Ovary (tissue), 10 donors: ENCODE measurements at regions of chr2 and their contacts with region 1.

Region 1: GRCh38 chr2:189580658-189581353 is at the start of gene SLC40A1:
- DNase-seq: peak; percentile 88 to 91 (median 88)
- H3K4me3 ChIP-seq: peak within 1 kb of the TSS; percentile 68
- H3K27ac ChIP-seq: peak within 1 kb of the TSS; percentile 90 to 92
- H3K4me1 ChIP-seq: peaks cover 10% of the 10 kb centered on the region
- H3K27me3 ChIP-seq: no peaks in the 10 kb centered on the region
- CTCF ChIP-seq: peak in 2 of 3 donors; percentile 26 to 40
- EP300 ChIP-seq: no peak
- POLR2A ChIP-seq: peak; percentile 97
- total RNA-seq, gene SLC40A1: 243 to 515 (median 365) TPM

Region 2: GRCh38 chr2:189439342-189439741 is 141.5 kb before region 1 on chr2:
- intact Hi-C with region 1: no loop called
- DNase-seq: no peak
- H3K4me3 ChIP-seq: no peak overlapping the region
- H3K27ac ChIP-seq: no peak overlapping the region
- H3K4me1 ChIP-seq: peaks cover 9% of the 10 kb centered on the region
- H3K27me3 ChIP-seq: no peaks in the 10 kb centered on the region
- CTCF ChIP-seq: no peak
- EP300 ChIP-seq: no peak
- POLR2A ChIP-seq: no peak

Region 3: GRCh38 chr2:189474526-189474925 is 106.3 kb before region 1 on chr2:
- intact Hi-C with region 1: loop called in 1 of 4 experiments (anchors 5 kb)
- DNase-seq: no peak
- H3K4me3 ChIP-seq: no peak overlapping the region
- H3K27ac ChIP-seq: no peak overlapping the region
- H3K4me1 ChIP-seq: no peaks in the 10 kb centered on the region
- H3K27me3 ChIP-seq: no peaks in the 10 kb centered on the region
- CTCF ChIP-seq: no peak
- EP300 ChIP-seq: no peak
- POLR2A ChIP-seq: no peak

Region 4: GRCh38 chr2:189498205-189498604 is 82.6 kb before region 1 on chr2:
- intact Hi-C with region 1: loop called in 2 of 4 experiments (anchors 10 kb)
- DNase-seq: peak; percentile 28 to 50 (median 42)
- H3K4me3 ChIP-seq: no peak overlapping the region
- H3K27ac ChIP-seq: peak overlapping the region in 1 of 2 donors; percentile 32
- H3K4me1 ChIP-seq: peaks cover 5% of the 10 kb centered on the region
- H3K27me3 ChIP-seq: no peaks in the 10 kb centered on the region
- CTCF ChIP-seq: peak in 1 of 3 donors; percentile 35
- EP300 ChIP-seq: no peak
- POLR2A ChIP-seq: no peak

Region 5: GRCh38 chr2:189506514-189506976 is 74.3 kb before region 1 on chr2:
- intact Hi-C with region 1: loop called in 1 of 4 experiments (anchors 10 kb)
- DNase-seq: no peak
- H3K4me3 ChIP-seq: no peak overlapping the region
- H3K27ac ChIP-seq: no peak overlapping the region
- H3K4me1 ChIP-seq: peaks cover 5% of the 10 kb centered on the region
- H3K27me3 ChIP-seq: no peaks in the 10 kb centered on the region
- CTCF ChIP-seq: no peak
- EP300 ChIP-seq: no peak
- POLR2A ChIP-seq: no peak

Region 6: DNA sequence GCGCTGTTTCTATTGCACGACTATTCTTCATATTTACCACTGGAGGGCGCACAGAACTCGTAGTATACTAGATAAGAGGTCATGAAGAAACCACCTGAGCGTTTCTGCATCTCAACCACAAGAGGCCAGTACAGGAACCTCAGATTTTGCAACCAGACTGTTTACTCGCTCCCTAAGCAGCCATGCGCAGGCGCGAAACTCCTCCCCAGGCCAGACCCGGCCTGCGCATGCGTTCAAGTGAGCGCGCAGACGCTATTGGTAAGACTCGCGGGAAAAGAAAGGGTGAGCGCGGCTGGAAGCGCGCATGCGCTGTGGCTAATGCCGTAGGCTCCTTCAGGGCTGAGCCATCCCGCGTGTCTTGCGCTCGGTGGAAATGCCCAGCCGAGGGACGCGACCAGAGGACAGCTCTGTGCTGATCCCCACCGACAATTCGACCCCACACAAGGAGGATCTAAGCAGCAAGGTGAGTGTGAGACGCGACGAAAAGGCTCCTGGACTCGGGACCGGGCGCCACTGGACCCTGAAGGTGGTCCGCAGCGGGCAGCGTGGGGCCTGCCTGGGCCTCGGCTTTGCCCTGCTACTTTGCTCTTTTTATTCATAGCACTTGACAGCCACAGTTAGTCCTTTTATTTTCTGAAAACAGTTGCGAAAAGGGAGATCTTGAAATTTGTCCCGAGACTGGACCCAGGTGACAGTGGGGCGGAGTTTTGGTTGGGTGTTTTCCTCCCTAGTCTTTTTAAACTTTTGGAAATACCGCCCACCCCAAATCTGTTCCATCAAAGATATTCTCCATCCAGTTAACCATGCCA is 80.5 kb after region 1 on chr2 and contains the start of gene ASNSD1:
- intact Hi-C with region 1: loop called in 2 of 4 experiments (anchors 5 kb)
- DNase-seq: peak; percentile 98 to 99 (median 99)
- H3K4me3 ChIP-seq: peak within 1 kb of the TSS; percentile 84
- H3K27ac ChIP-seq: peak within 1 kb of the TSS; percentile 31 to 66
- H3K4me1 ChIP-seq: peaks cover 10% of the 10 kb centered on the region
- H3K27me3 ChIP-seq: no peaks in the 10 kb centered on the region
- CTCF ChIP-seq: peak; percentile 99
- EP300 ChIP-seq: no peak
- POLR2A ChIP-seq: peak; percentile 87
- total RNA-seq, gene ASNSD1: 38.5 to 61.9 (median 47.3) TPM